Prostate gland (tissue), 2 donors: ENCODE measurements at regions of chr9 and their contacts with region 1.

Region 1: DNA sequence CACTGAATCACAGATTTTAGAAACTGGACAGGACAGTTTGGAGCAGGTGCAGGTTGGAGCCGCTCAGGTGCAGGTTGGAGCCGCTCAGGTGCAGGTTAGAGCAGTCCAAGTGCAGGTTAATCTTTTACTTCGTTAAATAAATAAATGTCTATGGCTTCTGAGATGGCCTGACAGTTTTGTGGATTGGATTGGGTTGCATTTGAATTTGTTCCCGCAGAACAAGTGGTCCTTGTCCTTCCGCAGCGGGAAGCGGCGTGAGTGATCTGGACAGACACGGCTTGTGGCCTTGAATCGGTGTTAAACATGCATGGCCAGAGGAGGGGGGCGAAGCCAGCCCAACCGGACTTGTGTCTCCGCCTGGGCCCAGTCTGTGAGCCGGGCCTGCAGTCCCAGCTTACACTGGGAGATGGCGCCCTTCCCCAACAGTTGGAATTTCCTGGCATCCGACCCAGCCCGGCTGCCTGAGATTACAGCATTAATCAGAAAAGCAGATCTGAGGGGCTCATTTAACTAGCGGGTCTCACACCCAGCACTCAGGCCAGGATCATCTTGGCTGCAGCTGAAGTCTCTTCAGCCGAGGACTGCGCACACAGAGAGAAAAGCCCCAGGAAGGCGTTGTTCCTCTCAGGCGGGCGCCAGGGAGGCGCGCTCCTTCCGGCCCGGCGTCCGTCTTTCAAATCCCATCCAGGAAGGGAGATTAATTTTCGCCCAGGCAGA is 1.5 kb upstream of the OLFM1 start:
- DNase-seq: peak; percentile 84
- H3K4me3 ChIP-seq: peak overlapping the region in 1 of 2 donors; percentile 23
- H3K27ac ChIP-seq: peak overlapping the region in 1 of 2 donors; percentile 27
- H3K4me1 ChIP-seq: peaks cover 12% of the 10 kb centered on the region
- H3K27me3 ChIP-seq: peaks cover 6% of the 10 kb centered on the region
- CTCF ChIP-seq: peak; percentile 86 to 99 (median 96)
- POLR2A ChIP-seq: no peak

Region 2: DNA sequence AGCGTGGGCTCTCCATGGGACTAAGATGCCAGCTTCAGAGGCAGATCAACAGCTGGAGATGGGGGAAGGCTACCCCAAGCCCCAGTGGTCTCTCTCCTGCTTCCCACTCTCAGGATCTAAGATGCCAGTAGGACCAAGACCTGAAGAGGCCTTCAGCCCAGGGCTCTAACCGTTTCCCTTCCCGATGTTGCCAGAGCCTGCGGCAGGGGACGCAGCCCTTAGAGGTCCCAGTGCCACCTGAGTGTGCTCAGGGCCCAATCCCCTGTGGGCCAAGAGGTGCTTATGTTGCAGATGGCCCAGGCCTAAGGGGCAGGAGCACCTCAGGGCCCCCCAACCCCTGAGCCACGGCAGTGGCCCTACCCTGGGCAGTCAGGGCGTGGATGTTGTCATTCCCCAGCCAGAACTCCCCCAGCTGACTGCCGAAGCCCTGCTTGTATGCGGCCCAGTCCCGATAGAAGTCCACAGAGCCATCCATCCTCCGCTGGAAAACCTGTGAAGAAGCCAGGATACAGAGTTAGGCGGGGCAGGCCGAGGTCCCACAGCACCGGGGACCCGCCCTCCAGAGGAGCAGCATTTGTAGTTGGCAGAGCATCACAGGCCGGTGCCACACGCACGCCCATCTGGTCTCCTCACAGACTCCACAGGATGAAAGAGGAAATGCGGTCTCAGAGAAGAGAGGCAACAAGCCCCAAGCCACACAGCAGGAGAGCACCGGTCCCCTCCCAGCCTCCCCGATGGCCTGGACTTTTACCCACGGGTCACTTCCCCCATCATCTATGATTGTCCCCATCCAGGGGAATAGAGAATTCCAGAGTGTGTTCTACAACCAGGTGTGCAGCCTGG is 173.6 kb before region 1 on chr9:
- intact Hi-C with region 1: no loop called
- DNase-seq: no peak
- H3K4me3 ChIP-seq: no peak overlapping the region
- H3K27ac ChIP-seq: no peak overlapping the region
- H3K4me1 ChIP-seq: no peaks in the 10 kb centered on the region
- H3K27me3 ChIP-seq: no peaks in the 10 kb centered on the region
- CTCF ChIP-seq: no peak
- POLR2A ChIP-seq: no peak

Region 3: GRCh38 chr9:135037521-135038250 is 48.3 kb before region 1 on chr9:
- intact Hi-C with region 1: no loop called
- DNase-seq: no peak
- H3K4me3 ChIP-seq: no peak overlapping the region
- H3K27ac ChIP-seq: no peak overlapping the region
- H3K4me1 ChIP-seq: no peaks in the 10 kb centered on the region
- H3K27me3 ChIP-seq: no peaks in the 10 kb centered on the region
- CTCF ChIP-seq: no peak
- POLR2A ChIP-seq: no peak

Region 4: DNA sequence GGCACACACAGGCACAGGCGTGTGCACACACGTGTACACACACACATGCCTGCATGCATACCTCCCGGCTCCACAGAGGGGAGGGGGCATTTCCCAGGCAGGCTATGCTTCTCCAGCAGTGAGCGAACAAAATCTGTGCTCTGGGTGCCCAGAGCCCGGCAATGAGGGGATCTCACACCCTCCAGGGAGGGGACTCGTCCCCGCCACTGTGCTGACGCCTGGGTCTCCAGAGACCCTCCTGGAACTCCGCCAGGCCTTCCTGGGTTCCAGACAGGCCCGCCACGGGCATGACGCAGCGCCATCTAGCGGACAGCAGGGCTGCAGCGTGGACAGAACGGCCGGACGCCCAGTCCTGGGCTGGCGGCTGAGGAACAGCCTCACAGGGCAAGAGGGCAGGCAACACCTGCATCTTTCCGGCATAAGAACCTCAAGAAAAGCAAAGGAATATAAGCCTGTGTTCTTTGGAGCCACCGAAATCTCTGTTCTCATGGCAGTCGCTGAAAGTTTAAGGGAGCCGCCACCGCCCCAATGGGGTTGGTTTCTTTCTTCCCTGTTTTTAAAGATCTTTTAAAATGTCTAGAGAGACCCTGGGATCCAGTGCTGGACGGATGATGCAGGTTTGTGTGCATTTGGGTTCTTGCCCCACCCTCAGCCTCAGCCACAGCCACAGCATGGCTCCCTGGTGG is 258.0 kb after region 1 on chr9:
- intact Hi-C with region 1: loop called (anchors 2 kb)
- DNase-seq: peak; percentile 38
- H3K4me3 ChIP-seq: no peak overlapping the region
- H3K27ac ChIP-seq: no peak overlapping the region
- H3K4me1 ChIP-seq: no peaks in the 10 kb centered on the region
- H3K27me3 ChIP-seq: peaks cover 10% of the 10 kb centered on the region
- CTCF ChIP-seq: peak; percentile 91 to 95 (median 94)
- POLR2A ChIP-seq: no peak

Region 5: GRCh38 chr9:135410831-135411473 is 325.0 kb after region 1 on chr9:
- intact Hi-C with region 1: loop called (anchors 1 kb)
- DNase-seq: no peak
- H3K4me3 ChIP-seq: no peak overlapping the region
- H3K27ac ChIP-seq: no peak overlapping the region
- H3K4me1 ChIP-seq: no peaks in the 10 kb centered on the region
- H3K27me3 ChIP-seq: no peaks in the 10 kb centered on the region
- CTCF ChIP-seq: no peak
- POLR2A ChIP-seq: no peak